Panc1 (cell line): ENCODE measurements at regions of chr12 and their contacts with region 1.

Region 1: DNA sequence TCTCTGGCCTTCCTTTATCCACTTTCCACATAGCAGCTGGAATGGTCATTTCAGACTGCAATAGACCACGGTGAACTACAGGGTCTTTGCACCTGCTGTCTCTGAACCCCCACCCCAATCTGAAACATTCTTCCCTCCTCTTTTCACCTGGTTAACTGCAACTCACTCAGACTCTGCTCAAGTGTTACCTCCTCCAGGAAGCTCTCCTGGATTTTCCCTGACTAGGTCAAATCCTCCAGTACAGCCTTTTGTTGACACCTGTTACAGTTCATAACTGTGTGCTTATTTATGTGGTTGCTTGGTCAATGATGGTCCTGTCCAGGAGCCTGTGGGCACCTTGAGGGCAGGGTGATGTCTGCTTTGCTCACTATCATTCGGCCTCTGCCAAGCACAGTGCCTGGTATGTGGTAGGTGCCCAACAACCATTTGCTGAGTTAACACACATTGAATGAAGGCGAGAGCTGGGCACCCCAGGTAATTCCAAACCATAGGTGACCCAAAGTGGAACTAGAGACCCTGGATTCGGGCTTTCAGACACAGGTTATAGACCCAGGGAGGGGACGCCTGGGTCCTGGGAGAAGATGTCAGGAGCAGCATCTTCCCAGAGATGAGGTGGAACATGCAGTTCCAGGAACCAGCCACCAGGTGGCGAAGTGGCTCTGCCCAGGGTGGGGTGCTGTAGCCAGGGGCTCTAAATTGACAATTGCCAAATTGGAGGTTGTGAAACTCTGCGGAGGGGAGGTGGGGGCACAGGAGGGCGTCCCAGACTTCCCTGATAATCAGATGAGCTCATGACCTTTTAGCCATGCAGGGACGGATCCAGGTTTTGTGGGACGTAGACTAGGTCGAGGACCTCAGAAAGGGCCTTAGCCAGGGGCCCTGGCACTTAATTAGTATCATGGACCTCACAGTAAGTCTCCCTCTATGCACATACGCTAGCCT is 28.1 kb downstream of the TRPV4 start:
- DNase-seq: peak; percentile 47
- ATAC-seq: peak; percentile 90
- H3K4me3 ChIP-seq: no peak overlapping the region
- H3K27ac ChIP-seq: no peak overlapping the region
- H3K4me1 ChIP-seq: no peaks in the 10 kb centered on the region
- H3K27me3 ChIP-seq: no peaks in the 10 kb centered on the region
- CTCF ChIP-seq: peak; percentile 96

Region 2: DNA sequence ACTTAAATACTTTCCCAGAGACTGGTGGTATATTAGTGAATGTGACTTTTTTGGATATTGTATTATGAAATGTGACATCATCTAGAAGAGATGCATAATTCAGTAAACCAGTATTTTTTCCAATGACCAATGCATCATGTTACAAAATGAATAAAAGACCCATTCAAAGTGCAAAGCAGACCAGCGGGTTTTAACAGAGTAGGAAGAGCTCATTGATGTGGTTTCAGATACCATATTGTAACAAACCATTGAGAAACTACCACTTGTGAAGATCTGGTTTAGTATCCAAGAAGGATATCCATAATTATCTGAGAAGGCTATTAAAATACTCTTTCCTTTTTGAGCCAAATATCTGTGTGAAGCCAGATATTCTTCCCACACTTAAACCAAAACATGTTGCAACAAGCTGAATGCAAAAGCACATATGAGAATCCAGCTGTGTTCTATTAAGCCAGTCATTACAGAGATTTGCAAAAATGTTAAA is 183.8 kb before region 1 on chr12:
- CTCF ChIA-PET with region 1: no interaction called
- POLR2A ChIA-PET with region 1: no interaction called
- in situ Hi-C with region 1: no loop called
- intact Hi-C with region 1: no loop called
- DNase-seq: no peak
- ATAC-seq: no peak
- H3K4me3 ChIP-seq: no peak overlapping the region
- H3K27ac ChIP-seq: no peak overlapping the region
- H3K4me1 ChIP-seq: no peaks in the 10 kb centered on the region
- H3K27me3 ChIP-seq: peaks cover 10% of the 10 kb centered on the region
- CTCF ChIP-seq: no peak

Region 3: GRCh38 chr12:109844983-109845823 is 40.1 kb after region 1 on chr12:
- CTCF ChIA-PET with region 1: interaction called, 17 read pairs
- POLR2A ChIA-PET with region 1: no interaction called
- in situ Hi-C with region 1: no loop called
- intact Hi-C with region 1: loop called (anchors 1 kb)
- DNase-seq: peak; percentile 41
- ATAC-seq: peak; percentile 96
- H3K4me3 ChIP-seq: peak overlapping the region; percentile 23 to 53
- H3K27ac ChIP-seq: peak overlapping the region; percentile 11; the same call in 1 of the 2 replicates
- H3K4me1 ChIP-seq: no peaks in the 10 kb centered on the region
- H3K27me3 ChIP-seq: no peaks in the 10 kb centered on the region
- CTCF ChIP-seq: peak; percentile 100